ENCODE measurements at regions of chr20 and their contacts with region 1.

Region 1: DNA sequence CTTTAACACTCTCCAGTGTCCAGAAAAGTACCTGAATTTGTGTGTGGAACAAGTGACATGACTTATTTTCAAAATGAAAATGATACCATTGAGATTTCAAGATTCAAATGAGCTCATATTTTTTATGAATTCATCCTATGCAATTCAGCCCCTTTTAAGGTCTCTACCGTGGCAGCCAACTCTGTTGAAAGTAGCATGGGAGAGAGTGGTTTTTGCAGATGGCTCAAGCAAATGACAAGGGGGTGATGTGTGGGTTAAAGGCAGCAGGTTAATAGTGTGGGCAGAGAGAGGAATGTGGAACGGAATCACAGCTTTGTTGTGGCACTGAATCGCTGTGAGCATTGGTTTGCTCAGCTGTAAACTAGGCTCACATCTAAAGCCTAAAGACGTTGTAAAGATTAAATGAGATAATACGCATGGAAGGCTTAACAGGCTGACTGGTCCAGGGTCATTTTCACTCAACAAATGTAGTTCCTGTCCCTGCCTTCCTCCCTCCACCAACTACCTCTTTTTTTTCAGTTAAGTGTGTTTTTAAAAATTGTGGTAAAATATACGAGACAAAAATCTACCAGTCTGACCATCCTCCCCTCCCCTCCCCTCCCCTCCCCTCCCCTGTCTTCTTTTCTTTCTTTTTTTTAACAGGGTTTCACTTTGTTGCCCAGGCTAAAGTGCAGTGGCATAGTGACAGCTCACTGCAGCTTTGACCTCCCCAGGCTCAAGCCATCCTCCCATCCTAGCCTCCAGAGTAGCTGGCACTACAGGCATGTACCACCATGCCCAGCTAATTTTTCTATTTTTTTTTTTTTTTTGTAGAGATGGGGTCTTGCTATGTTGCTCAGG is 114.7 kb upstream of the ZNF217 start:
- DNase-seq: peak; percentile 28
- H3K4me3 Mint-ChIP-seq: peak overlapping the region; percentile 59
- H3K27ac Mint-ChIP-seq: peak overlapping the region; percentile 96
- H3K4me1 Mint-ChIP-seq: peaks cover 47% of the 10 kb centered on the region
- H3K27me3 Mint-ChIP-seq: no peaks in the 10 kb centered on the region

Region 2: GRCh38 chr20:53578492-53579222 is 129.7 kb before region 1 on chr20:
- CTCF ChIA-PET with region 1: interaction called, 3 read pairs
- POLR2A ChIA-PET with region 1: interaction called, 10 read pairs
- DNase-seq: peak; percentile 55
- H3K4me3 Mint-ChIP-seq: peak overlapping the region; percentile 78
- H3K27ac Mint-ChIP-seq: peak overlapping the region; percentile 80
- H3K4me1 Mint-ChIP-seq: peaks cover 92% of the 10 kb centered on the region
- H3K27me3 Mint-ChIP-seq: no peaks in the 10 kb centered on the region

Region 3: GRCh38 chr20:53750827-53751619 is 42.7 kb after region 1 on chr20:
- CTCF ChIA-PET with region 1: interaction called, 3 read pairs
- POLR2A ChIA-PET with region 1: interaction called, 16 read pairs
- DNase-seq: peak; percentile 56
- H3K4me3 Mint-ChIP-seq: peak overlapping the region; percentile 16
- H3K27ac Mint-ChIP-seq: peak overlapping the region; percentile 96
- H3K4me1 Mint-ChIP-seq: peaks cover 69% of the 10 kb centered on the region
- H3K27me3 Mint-ChIP-seq: no peaks in the 10 kb centered on the region

Measured in activated CD4-positive, alpha-beta memory T cell treated with anti-CD3 and anti-CD28 coated beads, Interleukin-2, amount 10 ng/mL, durations not matched to agents 7 days and 5 days (primary cell).